ENCODE measurements at regions of chr3 and their contacts with region 1.

Region 1: GRCh38 chr3:183377307-183377959 is 51.0 kb downstream of the MCF2L2 start:
- DNase-seq: no peak
- H3K4me3 ChIP-seq: no peak overlapping the region
- H3K27ac ChIP-seq: no peak overlapping the region
- H3K27me3 ChIP-seq: no peaks in the 10 kb centered on the region
- CTCF ChIP-seq: no peak

Region 2: DNA sequence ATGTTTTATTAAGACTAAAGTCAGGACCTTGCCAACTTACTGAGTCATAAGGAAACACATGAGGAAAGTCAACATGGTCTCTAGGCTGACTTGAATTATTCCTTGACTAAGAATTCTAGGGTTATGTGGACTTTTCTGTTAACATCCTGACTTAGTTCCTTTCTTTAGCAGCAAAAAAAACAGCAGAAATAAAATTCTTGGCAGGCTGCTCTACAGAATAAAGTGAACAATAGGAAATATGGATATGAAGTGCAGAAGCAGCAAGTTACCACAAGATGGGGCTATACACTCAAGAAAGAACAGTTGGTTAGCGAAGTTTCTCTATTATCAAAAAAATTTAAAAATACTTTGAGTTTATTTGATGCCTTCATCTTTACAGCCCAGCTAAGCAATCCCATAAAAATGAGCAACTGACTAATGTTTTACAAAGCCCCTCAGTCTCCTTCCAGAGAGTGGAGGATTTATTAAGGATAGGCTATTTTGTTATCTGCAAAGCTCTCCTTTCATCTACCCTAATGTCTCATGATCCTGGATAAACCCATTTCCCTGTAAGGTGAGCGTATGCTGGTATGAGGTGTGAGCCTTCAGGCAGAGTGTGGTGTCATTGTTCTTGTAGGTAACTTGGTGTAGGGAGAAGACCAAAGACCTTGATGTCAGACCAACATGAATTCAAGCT is 255.0 kb before region 1 on chr3:
- intact Hi-C with region 1: loop called (anchors 2 to 5 kb)
- DNase-seq: no peak
- H3K4me3 ChIP-seq: no peak overlapping the region
- H3K27ac ChIP-seq: no peak overlapping the region
- H3K27me3 ChIP-seq: no peaks in the 10 kb centered on the region
- CTCF ChIP-seq: peak; percentile 78 to 98 (median 90)

Region 3: DNA sequence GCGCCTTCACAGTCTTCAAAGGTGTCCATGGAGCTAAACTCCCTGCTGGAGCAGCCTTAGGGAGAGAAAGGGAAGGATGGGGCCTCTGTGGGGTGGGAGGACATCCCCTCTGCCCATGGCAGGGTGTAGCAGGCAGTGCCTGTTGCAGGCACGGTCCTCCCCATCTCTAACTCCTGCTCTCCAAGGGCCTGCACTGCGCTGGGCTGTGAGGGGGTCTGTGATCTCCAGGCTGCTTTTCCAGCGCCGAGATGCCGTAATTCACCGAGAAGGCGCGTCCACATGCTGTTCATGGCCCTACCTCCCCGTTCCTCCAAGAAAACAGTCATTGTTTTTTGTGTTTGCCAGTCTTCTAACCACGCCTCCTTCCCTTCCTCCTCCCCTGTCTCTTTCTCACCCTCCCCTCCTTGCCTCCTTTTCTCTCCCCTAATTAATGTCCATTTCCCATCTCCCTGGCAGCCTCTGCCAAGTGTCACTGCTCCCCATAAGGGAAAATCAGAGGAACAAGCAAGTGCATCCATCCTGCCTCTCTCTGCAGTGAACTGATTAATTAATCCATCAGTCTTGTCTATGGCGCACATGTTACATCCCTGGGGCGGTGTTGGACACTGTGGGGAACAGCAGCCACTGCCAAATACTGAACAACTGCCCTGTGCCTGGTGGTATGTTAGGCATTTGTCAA is 197.2 kb before region 1 on chr3:
- intact Hi-C with region 1: loop called (anchors 1 to 5 kb)
- DNase-seq: peak in 1 of 10 donors; percentile 17
- H3K4me3 ChIP-seq: peak overlapping the region in 57 of 59 donors; percentile 15 to 83 (median 70)
- H3K27ac ChIP-seq: peak overlapping the region in 12 of 59 donors; percentile 4 to 86 (median 52)
- H3K27me3 ChIP-seq: no peaks in the 10 kb centered on the region
- CTCF ChIP-seq: no peak